Astrocyte of the cerebellum (primary cell): ENCODE measurements at regions of chr2 and their contacts with region 1.

Region 1: DNA sequence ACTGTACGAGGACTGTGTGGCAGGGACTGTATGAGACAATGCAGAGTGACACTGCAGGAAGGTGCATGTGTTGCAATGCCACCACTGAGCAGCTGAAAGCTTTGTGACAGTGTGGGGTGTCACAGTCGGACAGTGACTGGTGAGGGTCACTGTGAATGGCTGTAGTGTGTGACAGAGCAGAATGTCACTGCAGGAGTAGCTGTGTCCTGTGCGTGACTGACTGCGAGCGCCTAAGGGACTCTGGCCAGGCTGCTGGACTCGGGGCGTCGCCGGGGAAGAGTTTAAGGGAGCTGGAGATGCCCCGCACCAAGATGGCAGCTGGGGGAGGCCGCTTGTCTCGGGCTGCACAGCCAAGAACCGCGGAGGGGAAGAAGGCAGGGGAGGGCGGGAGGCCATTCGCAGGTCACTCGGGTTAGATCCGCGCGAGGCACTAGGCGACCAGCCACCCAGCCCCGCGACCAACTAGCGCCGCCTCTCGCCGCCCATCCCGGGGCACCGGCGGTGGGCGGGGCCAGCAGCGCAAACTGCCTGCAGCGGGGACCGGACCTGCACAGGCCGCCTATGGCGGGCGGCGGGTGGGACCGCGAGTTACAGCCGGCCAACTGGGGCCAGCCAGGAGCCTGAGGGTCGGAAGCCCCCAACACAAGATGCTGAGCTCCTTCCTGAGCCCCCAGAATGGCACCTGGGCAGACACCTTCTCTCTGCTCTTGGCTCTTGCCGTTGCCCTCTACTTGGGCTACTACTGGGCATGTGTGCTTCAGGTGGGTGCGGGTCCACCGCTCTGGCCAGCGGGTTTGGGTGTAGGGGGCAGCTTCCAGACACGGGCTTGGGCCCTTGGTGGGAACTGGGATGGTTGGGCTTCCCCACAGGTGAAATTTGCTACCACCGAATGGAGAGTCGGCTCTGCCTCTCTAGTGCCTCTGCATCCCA is at the start of gene ABHD1:
- DNase-seq: no peak
- H3K4me3 ChIP-seq: peak within 1 kb of the TSS; percentile 53
- CTCF ChIP-seq: no peak

Region 2: GRCh38 chr2:27086090-27086723 is 37.4 kb before region 1 on chr2:
- in situ Hi-C with region 1: no loop called
- DNase-seq: peak; percentile 78
- H3K4me3 ChIP-seq: peak overlapping the region; percentile 44
- CTCF ChIP-seq: peak; percentile 65

Region 3: GRCh38 chr2:27191053-27191829 is 67.7 kb after region 1 on chr2:
- in situ Hi-C with region 1: loop called (anchors 10 kb)
- DNase-seq: peak; percentile 50
- H3K4me3 ChIP-seq: no peak overlapping the region
- CTCF ChIP-seq: peak; percentile 73

Region 4: GRCh38 chr2:27264753-27265535 is 141.4 kb after region 1 on chr2:
- in situ Hi-C with region 1: loop called (anchors 5 kb)
- DNase-seq: no peak
- H3K4me3 ChIP-seq: peak overlapping the region; percentile 12
- CTCF ChIP-seq: peak; percentile 57